BJ (cell line): ENCODE measurements at regions of chr16 and their contacts with region 1.

Region 1: DNA sequence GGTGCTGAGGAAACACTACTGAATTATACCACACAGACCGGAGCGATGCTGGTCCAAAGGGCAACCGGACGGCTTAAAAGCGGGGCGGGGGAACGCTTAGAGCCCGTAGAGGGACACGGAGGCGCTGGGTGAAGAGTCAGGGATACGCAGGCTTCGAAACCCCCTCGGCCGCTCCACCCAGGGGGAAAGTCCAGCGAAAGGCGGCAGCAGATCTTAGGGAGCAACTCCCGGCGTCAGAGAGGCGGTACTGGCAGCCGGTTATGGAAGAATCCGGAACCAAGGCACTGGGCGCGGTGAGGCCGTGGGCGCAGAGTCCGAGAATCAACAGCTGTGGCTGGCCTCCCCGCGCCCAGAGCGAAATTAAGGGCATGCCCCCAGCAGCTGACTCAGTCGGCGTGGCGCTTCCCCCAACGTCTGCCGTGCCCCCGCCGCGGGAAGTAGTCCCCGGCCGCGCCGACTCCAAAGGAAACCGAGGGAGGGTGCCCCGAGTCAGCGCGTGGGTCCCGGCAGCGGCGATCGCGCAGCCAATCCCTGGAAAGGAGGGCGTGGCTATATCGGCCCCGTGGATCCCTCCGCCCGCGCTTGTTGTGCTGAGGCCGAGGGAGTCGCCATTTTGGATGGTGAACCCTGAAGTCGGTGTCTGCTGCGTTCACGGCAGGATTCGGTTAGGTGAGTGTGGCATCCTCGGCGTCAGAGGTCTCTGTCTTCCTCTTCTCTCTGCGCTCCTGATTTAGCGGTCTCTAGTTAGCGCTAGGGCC is at the start of gene IST1:
- DNase-seq: peak; percentile 76
- H3K4me3 ChIP-seq: peak within 1 kb of the TSS; percentile 96
- H3K27me3 ChIP-seq: no peaks in the 10 kb centered on the region
- CTCF ChIP-seq: peak; percentile 16; the same call in 1 of the 2 replicates
- polyA plus RNA-seq, gene IST1: 227 and 236 TPM in 2 replicates

Region 2: GRCh38 chr16:71915350-71915749 is 20.2 kb after region 1 on chr16:
- CTCF ChIA-PET with region 1: no interaction called
- POLR2A ChIA-PET with region 1: no interaction called
- DNase-seq: no peak
- H3K4me3 ChIP-seq: no peak overlapping the region
- H3K27me3 ChIP-seq: no peaks in the 10 kb centered on the region
- CTCF ChIP-seq: no peak

Region 3: DNA sequence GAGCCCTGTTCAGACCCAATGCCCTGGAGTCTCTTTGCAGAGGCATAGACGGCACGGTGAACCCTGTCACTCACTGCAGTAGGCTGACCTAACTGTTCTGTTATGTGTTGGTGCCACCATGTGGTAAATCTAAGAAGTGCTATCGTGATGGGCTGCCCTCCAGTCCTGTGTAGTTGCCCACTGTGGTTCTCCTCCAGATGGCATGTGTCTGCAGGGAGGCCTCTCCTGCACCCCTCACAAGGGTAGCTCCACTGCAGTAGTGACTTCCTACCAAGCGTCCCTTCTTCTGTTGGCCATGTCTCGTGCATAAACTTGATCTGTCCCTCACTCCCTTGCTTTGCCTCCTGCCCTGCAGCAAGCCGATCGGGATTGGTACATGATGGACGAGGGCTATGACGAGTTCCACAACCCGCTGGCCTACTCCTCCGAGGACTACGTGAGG is 204.3 kb after region 1 on chr16:
- CTCF ChIA-PET with region 1: no interaction called
- POLR2A ChIA-PET with region 1: interaction called, 10 read pairs
- DNase-seq: no peak
- H3K4me3 ChIP-seq: no peak overlapping the region
- H3K27me3 ChIP-seq: no peaks in the 10 kb centered on the region
- CTCF ChIP-seq: peak; percentile 48

Region 4: GRCh38 chr16:72131036-72131435 is 235.9 kb after region 1 on chr16:
- CTCF ChIA-PET with region 1: no interaction called
- POLR2A ChIA-PET with region 1: no interaction called
- DNase-seq: no peak
- H3K4me3 ChIP-seq: no peak overlapping the region
- H3K27me3 ChIP-seq: no peaks in the 10 kb centered on the region
- CTCF ChIP-seq: no peak

Region 5: DNA sequence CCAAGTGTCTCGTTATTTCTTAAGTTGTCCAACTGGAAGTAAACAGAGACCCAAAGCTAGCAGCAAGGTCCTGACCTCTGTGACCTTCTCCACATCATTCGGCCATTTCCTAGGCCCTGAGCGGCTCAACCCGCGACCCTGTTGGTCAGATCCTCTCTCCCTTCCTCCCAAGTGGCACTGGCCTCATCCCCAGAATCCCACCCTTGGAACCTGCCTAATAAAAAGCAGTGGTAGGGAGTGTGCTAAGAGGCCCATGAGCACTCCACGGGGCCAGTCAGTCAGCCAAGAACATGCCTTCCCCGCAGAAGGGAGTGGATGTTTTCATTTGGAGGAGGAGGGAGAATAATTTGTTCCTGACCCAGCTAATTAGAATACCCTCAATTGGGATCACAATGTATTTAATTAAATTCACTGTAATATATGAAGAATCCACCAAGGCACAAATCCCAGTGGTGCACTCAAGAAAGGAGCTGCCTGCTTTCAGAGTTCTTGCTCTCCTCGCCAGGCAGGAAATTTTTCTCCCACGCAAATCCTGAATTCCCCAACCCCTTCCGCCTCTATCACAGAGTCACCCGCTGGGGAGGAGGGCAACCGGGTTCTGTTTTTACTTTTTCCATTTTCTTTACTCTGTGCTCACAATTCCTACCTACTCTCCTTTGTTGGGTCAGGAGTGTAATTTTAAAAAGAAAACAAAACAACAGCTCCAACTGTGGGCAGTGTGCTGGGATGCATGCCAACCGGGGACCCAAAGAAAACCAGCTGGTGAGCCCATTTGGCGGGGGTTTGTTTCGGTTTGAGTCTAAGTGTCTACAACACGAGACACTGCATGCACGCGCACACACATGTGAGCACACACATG is 999.4 kb after region 1 on chr16:
- CTCF ChIA-PET with region 1: no interaction called
- POLR2A ChIA-PET with region 1: interaction called, 12 read pairs
- DNase-seq: no peak
- H3K4me3 ChIP-seq: no peak overlapping the region
- H3K27me3 ChIP-seq: no peaks in the 10 kb centered on the region
- CTCF ChIP-seq: no peak